ENCODE measurements at regions of chr21 and their contacts with region 1.

Region 1: DNA sequence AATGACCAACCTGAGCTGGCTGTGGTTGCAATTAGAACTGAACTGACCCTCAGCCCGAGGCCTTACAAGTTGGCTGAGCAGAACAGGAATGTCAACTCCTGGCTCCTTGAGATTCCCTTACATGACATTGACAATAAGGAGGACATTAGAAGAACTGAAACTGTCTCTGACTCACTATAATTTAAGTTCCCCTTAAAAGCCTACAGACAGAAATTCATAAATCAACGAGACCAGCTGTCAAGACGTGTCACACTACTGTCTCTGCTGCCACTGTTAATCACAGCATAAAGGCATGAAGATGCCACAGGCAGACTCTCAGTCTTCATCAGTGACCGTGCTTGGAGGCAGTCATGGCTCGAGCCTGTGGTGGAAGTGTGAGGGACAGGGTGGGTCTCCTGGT is 168.8 kb downstream of the GABPA start:
- DNase-seq: no peak
- H3K4me3 ChIP-seq: no peak overlapping the region
- CTCF ChIP-seq: no peak
- POLR2A ChIP-seq: no peak

Region 2: GRCh38 chr21:25764065-25764464 is 139.5 kb before region 1 on chr21:
- intact Hi-C with region 1: no loop called
- DNase-seq: no peak
- H3K4me3 ChIP-seq: no peak overlapping the region
- CTCF ChIP-seq: no peak
- POLR2A ChIP-seq: no peak

Region 3: DNA sequence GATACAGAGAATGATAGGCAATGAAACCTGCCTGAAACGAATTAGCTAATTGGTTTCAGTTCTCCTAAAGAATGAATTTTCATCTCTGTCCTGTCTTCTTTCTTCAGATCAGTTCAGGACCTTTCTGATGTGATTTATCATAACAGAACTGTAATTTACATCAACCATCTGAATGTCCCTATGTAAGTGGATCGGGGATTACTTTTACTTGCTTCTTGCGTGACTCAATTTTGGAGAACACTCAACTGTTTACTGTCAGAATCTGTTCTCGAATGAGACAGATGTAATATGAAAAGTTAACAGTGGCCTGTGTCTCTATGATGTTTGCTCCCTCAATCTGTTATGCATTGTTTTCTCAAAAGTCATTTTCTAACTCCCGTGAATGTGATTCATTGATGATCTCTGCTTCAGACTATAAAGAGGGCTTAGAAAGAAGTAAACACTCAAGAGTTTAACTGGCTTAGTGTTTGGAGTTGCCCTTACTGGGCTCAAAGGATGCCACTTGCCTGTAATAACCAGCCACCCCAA is 57.8 kb before region 1 on chr21:
- intact Hi-C with region 1: no loop called
- DNase-seq: no peak
- H3K4me3 ChIP-seq: no peak overlapping the region
- CTCF ChIP-seq: no peak
- POLR2A ChIP-seq: no peak

Region 4: GRCh38 chr21:25929856-25930520 is 26.4 kb after region 1 on chr21:
- intact Hi-C with region 1: loop called (anchors 2 kb)
- DNase-seq: no peak
- H3K4me3 ChIP-seq: no peak overlapping the region
- CTCF ChIP-seq: no peak
- POLR2A ChIP-seq: no peak

Measured in lower leg skin (tissue), 4 donors.